ENCODE measurements at regions of chr2 and their contacts with region 1.

Region 1: DNA sequence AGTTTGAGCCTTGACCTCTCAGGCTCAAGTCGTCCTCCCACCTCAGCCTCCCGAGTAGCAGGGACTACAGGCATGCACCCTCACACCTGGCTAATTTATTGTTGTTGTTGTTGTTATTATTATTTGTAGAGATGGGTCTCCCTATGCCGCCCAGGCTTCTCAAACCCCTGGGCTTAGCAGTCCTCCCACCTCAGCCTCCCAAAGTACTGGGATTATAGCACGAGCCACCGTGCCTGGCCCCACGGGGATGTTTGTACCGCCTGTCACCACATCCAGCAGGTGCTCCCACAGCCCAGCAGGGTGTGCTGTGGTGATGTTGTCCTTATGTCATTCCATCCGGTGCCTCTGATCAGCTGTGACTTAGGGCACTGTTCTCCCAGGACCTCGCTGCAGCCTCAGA is 182.3 kb downstream of the INO80D start:
- DNase-seq: peak; percentile 79
- ATAC-seq: peak; percentile 98
- H3K4me3 ChIP-seq: no peak overlapping the region
- H3K27ac ChIP-seq: no peak overlapping the region
- H3K4me1 ChIP-seq: peaks cover 20% of the 10 kb centered on the region
- H3K27me3 ChIP-seq: peaks cover 0 to 48% of the 10 kb centered on the region in 2 experiments; a peak in 3 of 5 replicates
- CTCF ChIP-seq: peak; percentile 92
- EP300 ChIP-seq: no peak
- POLR2A ChIP-seq: no peak
- RAD21 ChIP-seq: peak; percentile 75

Region 2: DNA sequence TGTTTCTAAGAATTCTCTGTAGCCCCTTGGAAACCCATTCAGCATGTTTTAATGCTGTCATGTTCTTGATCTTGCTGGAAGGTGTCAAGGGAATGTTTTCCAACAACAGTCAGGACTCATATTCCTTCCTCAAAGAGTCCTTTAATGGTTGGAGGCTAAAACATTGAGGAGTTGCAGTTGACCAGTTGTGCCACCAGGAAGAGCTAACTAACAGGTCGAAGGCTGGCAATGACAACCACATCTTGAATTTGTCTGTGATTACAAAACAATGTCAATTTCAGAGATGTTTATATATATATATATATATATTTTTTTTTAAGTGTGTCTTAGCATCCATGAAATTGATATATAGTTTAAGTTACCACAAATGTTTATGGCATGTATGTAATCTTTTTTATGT is 30.8 kb after region 1 on chr2:
- CTCF ChIA-PET with region 1: no interaction called
- POLR2A ChIA-PET with region 1: no interaction called
- in situ Hi-C with region 1: no loop called
- intact Hi-C with region 1: no loop called
- DNase-seq: peak; percentile 34
- ATAC-seq: peak; percentile 75
- H3K4me3 ChIP-seq: no peak overlapping the region
- H3K27ac ChIP-seq: no peak overlapping the region
- H3K4me1 ChIP-seq: peaks cover 34% of the 10 kb centered on the region
- H3K27me3 ChIP-seq: peaks cover 0 to 2% of the 10 kb centered on the region in 2 experiments; a peak in 1 of 5 replicates
- CTCF ChIP-seq: peak; percentile 62
- EP300 ChIP-seq: no peak
- POLR2A ChIP-seq: no peak
- RAD21 ChIP-seq: peak; percentile 37; the same call in 1 of the 2 replicates

Region 3: DNA sequence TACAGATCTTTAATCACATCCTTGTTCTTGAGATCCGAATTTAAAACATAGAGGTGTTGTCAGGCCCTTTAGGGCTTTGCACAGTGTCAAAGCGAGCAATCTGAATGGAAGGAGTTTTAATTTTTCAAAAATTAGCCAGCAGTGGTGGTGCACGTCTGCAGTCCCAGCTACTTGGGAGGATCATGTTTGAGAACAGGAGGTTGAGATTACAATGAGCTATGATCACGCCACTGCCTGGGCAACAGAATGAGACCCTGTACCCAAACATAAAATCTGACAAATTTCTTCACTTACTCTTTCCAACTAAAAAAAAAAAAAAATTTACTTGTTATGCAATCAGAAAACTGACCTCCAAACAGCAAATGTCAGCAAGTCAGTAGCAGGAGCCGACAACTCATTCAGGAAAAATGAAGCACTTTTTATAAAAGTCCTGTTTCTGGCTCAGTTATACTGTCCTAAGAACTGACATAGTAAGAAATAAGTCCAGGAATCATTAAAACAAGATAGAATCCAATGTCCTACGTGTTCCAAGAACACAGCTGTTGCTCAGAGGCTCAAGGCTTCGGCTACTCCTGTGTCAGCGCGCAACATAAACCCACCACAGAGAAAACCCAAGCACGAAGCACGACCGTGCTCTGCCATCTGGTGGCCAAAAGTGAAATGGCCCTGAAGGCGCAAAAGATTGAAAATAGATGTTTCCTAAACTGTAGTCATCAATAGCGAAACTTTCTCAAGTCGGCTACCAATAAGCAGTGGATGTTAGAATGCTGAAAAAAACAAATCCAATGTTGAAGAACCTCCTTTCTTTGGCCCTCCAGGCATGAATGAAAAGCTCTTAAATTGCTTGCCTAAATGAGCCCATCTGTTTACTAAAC is 44.2 kb after region 1 on chr2:
- CTCF ChIA-PET with region 1: interaction called, 13 read pairs
- POLR2A ChIA-PET with region 1: no interaction called
- in situ Hi-C with region 1: loop called (anchors 5 kb)
- intact Hi-C with region 1: loop called (anchors 1 kb)
- DNase-seq: peak; percentile 68
- ATAC-seq: peak; percentile 71
- H3K4me3 ChIP-seq: peak overlapping the region; percentile 14 to 43 (median 29); a peak in 4 of 6 replicates
- H3K27ac ChIP-seq: no peak overlapping the region
- H3K4me1 ChIP-seq: peaks cover 77% of the 10 kb centered on the region
- H3K27me3 ChIP-seq: 0 out of 5 replicates have a peak, but pooled peaks cover 0 to 2% of the 10 kb centered on the region in 2 experiments
- CTCF ChIP-seq: peak; percentile 97
- EP300 ChIP-seq: peak in 1 of 2 experiments; percentile 27; a peak in 1 of 4 replicates
- POLR2A ChIP-seq: no peak
- RAD21 ChIP-seq: peak; percentile 92

Measured in HepG2 (cell line).